Ovary (tissue), 10 donors: ENCODE measurements at regions of chr9 and their contacts with region 1.

Region 1: DNA sequence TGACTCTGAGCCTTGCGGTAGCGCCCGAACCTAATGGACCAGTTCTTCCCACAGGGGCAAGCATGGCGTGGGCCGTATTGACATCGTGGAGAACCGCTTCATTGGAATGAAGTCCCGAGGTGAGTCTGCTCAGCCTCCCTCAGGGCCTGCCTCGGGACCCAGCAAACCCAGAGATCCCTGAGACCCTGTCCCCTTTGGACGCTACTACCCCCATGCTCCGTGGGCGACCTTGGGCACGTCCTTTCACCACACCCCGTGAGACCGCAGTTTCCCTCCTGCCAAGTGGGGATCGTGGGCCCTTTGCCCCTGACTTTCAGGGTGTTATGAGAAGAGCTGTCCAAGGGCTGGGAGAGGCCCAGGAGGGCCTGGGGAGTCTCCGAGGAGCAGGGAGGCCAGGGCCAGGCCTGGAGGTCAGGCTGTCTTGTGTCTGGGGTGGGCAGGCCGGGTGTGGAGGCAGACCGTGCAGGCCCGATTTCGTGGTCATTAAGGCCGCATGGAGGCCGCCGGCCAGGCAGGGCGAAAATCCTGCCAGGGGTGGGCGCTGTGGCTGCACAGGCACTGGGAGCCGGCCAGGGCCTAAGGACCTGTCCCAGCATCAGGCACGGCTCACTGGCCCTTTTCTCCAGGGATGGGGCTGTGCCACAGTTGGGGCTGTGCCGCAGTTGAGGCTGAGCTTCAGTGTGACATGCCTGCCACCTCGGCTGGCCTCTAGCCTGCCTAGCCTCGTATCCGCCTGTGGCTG is 35.7 kb downstream of the ASS1 start:
- DNase-seq: no peak
- H3K4me3 ChIP-seq: no peak overlapping the region
- H3K27ac ChIP-seq: no peak overlapping the region
- H3K4me1 ChIP-seq: no peaks in the 10 kb centered on the region
- H3K27me3 ChIP-seq: no peaks in the 10 kb centered on the region
- CTCF ChIP-seq: no peak
- EP300 ChIP-seq: no peak
- POLR2A ChIP-seq: no peak

Region 2: DNA sequence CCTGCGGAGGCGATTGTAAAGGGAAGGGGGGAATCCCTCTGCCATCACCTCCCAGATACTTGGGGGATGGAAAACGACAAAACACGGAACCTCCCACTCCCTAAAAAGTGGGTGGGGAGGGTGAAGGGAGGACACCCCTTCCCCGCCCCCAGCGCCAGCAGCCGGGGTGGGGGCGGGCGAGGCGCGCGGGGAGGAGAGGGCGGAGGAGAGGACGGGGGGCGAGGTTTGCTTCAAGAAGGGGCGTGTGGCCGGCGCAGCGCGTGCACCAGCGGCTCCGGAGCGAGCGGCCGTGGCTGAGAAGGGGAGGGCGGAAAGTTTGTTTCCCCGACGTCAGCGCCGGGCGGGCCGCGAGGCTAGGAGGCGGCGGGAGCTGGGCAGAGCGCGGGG is 815.1 kb before region 1 on chr9 and contains the start of gene PRRX2:
- intact Hi-C with region 1: loop called in 1 of 4 experiments (anchors 5 kb)
- DNase-seq: no peak
- H3K4me3 ChIP-seq: peak within 1 kb of the TSS; percentile 23
- H3K27ac ChIP-seq: no peak within 1 kb of the TSS
- H3K4me1 ChIP-seq: no peaks in the 10 kb centered on the region
- H3K27me3 ChIP-seq: no peaks in the 10 kb centered on the region
- CTCF ChIP-seq: no peak
- EP300 ChIP-seq: no peak
- POLR2A ChIP-seq: no peak
- total RNA-seq, gene PRRX2: 0.20 to 4.0 (median 1.4) TPM